ENCODE measurements at regions of chr4 and their contacts with region 1.

Region 1: GRCh38 chr4:11603591-11604194 is 175.0 kb upstream of the HS3ST1 start:
- DNase-seq: no peak
- H3K4me3 ChIP-seq: no peak overlapping the region
- H3K27ac ChIP-seq: no peak overlapping the region
- H3K4me1 ChIP-seq: no peaks in the 10 kb centered on the region
- H3K27me3 ChIP-seq: no peaks in the 10 kb centered on the region
- CTCF ChIP-seq: no peak
- POLR2A ChIP-seq: no peak

Region 2: DNA sequence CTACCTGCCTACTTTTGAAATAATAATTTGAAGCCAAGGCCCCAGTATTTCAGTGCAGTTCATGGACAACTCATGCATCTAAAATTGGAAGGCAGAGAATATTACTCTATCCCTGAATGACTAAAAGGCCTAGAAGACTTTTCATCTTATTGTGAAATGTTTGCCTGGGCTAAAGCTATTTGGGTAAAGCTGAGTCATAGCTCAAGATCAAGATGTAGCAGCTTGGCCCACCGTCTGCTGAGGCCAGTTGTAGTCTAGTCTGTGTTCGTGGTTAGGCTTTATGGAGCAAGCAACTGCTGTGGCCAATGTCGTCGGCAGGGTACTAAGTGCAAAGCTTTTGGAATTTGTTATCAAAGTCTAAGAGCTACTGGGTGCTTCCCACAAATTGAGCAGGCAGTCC is 951.3 kb after region 1 on chr4:
- intact Hi-C with region 1: loop called (anchors 5 kb)
- DNase-seq: no peak
- H3K4me3 ChIP-seq: no peak overlapping the region
- H3K27ac ChIP-seq: no peak overlapping the region
- H3K4me1 ChIP-seq: no peaks in the 10 kb centered on the region
- H3K27me3 ChIP-seq: no peaks in the 10 kb centered on the region
- CTCF ChIP-seq: no peak
- POLR2A ChIP-seq: no peak

Measured in breast epithelium (tissue), 4 donors.